H1 (cell line): ENCODE measurements at regions of chr5 and their contacts with region 1.

Region 1: GRCh38 chr5:58404734-58405133 is 55.2 kb downstream of the PLK2 start:
- DNase-seq: no peak
- H3K4me3 ChIP-seq: no peak overlapping the region
- H3K27ac ChIP-seq: no peak overlapping the region
- H3K4me1 ChIP-seq: peaks cover 0 to 14% (median 6%) of the 10 kb centered on the region in 4 experiments; a peak in 4 of 7 replicates
- H3K27me3 ChIP-seq: no peaks in the 10 kb centered on the region
- CTCF ChIP-seq: no peak
- EP300 ChIP-seq: no peak
- POLR2A ChIP-seq: no peak
- RAD21 ChIP-seq: no peak

Region 2: GRCh38 chr5:58392496-58392895 is 12.2 kb before region 1 on chr5:
- CTCF ChIA-PET with region 1: interaction called, 10 read pairs
- POLR2A ChIA-PET with region 1: no interaction called
- DNase-seq: no peak
- H3K4me3 ChIP-seq: no peak overlapping the region
- H3K27ac ChIP-seq: no peak overlapping the region
- H3K4me1 ChIP-seq: peaks cover 0 to 4% (median 2%) of the 10 kb centered on the region in 4 experiments; a peak in 3 of 7 replicates
- H3K27me3 ChIP-seq: no peaks in the 10 kb centered on the region
- CTCF ChIP-seq: no peak
- EP300 ChIP-seq: no peak
- POLR2A ChIP-seq: no peak
- RAD21 ChIP-seq: no peak

Region 3: GRCh38 chr5:58498340-58498942 is 93.7 kb after region 1 on chr5:
- CTCF ChIA-PET with region 1: no interaction called
- POLR2A ChIA-PET with region 1: no interaction called
- DNase-seq: peak; percentile 10 to 66
- H3K4me3 ChIP-seq: no peak overlapping the region
- H3K27ac ChIP-seq: no peak overlapping the region
- H3K4me1 ChIP-seq: no peaks in the 10 kb centered on the region
- H3K27me3 ChIP-seq: peaks cover 0 to 1% (median 0%) of the 10 kb centered on the region in 4 experiments; a peak in 1 of 7 replicates
- CTCF ChIP-seq: peak in 2 of 3 experiments; percentile 61 to 72; a peak in 2 of 4 replicates
- EP300 ChIP-seq: no peak
- POLR2A ChIP-seq: no peak
- RAD21 ChIP-seq: peak; percentile 76